ENCODE measurements at regions of chr9 and their contacts with region 1.

Region 1: DNA sequence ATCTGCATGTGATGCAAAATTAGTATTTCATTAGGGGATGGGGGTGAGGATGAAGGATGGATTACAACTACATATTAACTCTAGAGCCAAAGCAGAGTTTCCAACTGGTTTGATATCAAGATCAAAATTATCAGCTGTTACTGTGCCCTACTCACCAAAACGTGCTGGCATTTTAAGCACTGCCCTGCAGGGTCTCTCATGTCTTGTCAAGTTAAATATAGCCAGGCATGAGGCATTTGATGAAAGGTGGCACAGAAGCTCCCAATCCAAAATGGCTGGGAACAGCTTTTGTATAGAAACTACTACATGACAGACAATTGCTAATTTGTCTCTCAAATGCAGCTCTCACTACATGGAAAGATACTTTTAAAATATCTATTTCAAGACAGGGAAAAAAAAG is 27.1 kb upstream of the CAAP1 start:
- DNase-seq: no peak
- ATAC-seq: no peak
- H3K4me3 ChIP-seq: no peak overlapping the region
- H3K4me3 Mint-ChIP-seq: no peak overlapping the region
- H3K27ac ChIP-seq: no peak overlapping the region
- H3K27ac Mint-ChIP-seq: no peak overlapping the region
- H3K4me1 ChIP-seq: no peaks in the 10 kb centered on the region
- H3K4me1 Mint-ChIP-seq: no peaks in the 10 kb centered on the region
- H3K27me3 ChIP-seq: no peaks in the 10 kb centered on the region
- H3K27me3 Mint-ChIP-seq: no peaks in the 10 kb centered on the region
- CTCF ChIP-seq: no peak

Region 2: GRCh38 chr9:26856413-26857032 is 63.2 kb before region 1 on chr9:
- CTCF ChIA-PET with region 1: no interaction called
- POLR2A ChIA-PET with region 1: no interaction called
- intact Hi-C with region 1: loop called (anchors 2 kb)
- DNase-seq: peak; percentile 7
- ATAC-seq: no peak
- H3K4me3 ChIP-seq: no peak overlapping the region
- H3K4me3 Mint-ChIP-seq: no peak overlapping the region
- H3K27ac ChIP-seq: no peak overlapping the region
- H3K27ac Mint-ChIP-seq: no peak overlapping the region
- H3K4me1 ChIP-seq: no peaks in the 10 kb centered on the region
- H3K4me1 Mint-ChIP-seq: no peaks in the 10 kb centered on the region
- H3K27me3 ChIP-seq: no peaks in the 10 kb centered on the region
- H3K27me3 Mint-ChIP-seq: no peaks in the 10 kb centered on the region
- CTCF ChIP-seq: peak; percentile 35